T-cell (primary cell): ENCODE measurements at regions of chr2 and their contacts with region 1.

Region 1: DNA sequence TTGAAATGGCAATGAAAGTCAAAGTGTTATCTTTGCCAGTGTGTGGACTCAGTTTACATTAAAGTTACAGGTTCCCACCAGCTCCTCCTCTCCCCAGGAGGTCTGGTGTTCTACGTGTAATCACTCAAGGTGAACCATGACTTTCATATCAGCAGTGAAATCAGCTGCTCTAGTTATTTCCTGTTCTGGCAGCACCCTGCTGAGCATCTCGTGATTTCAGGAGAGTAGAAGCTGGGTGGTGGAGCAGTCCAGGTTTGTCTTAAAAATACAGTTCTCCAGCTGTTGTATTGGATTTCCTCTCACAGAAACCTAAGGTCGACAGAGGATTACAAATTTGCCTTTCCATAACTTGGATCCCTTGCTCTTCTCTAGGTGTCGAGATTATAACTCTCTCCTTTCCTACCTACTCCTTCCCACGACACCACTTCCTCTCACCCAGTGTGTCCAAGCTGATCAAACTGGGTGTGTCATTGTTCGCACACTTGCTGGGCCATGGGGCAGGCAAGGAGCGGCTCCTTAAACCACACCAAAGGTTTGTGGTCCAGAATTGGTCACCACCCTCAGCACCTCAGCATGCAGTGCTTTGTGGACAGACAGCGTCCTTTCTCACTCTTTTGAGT is 13.0 kb upstream of the ARHGAP25 start:
- DNase-seq: peak in 21 of 35 experiments; percentile 23 to 75 (median 35)
- ATAC-seq: peak; percentile 80 to 86 (median 84)
- H3K4me3 ChIP-seq: peak overlapping the region in 1 of 2 donors; percentile 18
- H3K4me3 Mint-ChIP-seq: peak overlapping the region; percentile 66 to 73 (median 70)
- H3K27ac ChIP-seq: peak overlapping the region; percentile 77
- H3K27ac Mint-ChIP-seq: peak overlapping the region; percentile 97 to 98
- H3K4me1 ChIP-seq: peaks cover 57 to 81% of the 10 kb centered on the region in 2 experiments
- H3K4me1 Mint-ChIP-seq: peaks cover 91 to 96% (median 94%) of the 10 kb centered on the region in 3 donors
- H3K27me3 ChIP-seq: no peaks in the 10 kb centered on the region
- H3K27me3 Mint-ChIP-seq: peaks cover 0 to 1% of the 10 kb centered on the region in 2 donors

Region 2: GRCh38 chr2:68709421-68709911 is 12.1 kb before region 1 on chr2:
- CTCF ChIA-PET with region 1: interaction called, 7 to 25 read pairs
- POLR2A ChIA-PET with region 1: interaction called in 1 of 2 experiments, 4 read pairs
- DNase-seq: peak in 1 of 35 experiments; percentile 59
- ATAC-seq: peak; percentile 50 to 80 (median 68)
- H3K4me3 ChIP-seq: no peak overlapping the region
- H3K4me3 Mint-ChIP-seq: no peak overlapping the region
- H3K27ac ChIP-seq: no peak overlapping the region
- H3K27ac Mint-ChIP-seq: peak overlapping the region; percentile 6 to 42
- H3K4me1 ChIP-seq: peaks cover 3 to 5% of the 10 kb centered on the region in 2 experiments
- H3K4me1 Mint-ChIP-seq: peaks cover 16 to 33% (median 19%) of the 10 kb centered on the region in 3 donors
- H3K27me3 ChIP-seq: no peaks in the 10 kb centered on the region
- H3K27me3 Mint-ChIP-seq: no peaks in the 10 kb centered on the region

Region 3: GRCh38 chr2:68734688-68735525 is 13.3 kb after region 1 on chr2 and contains the start of gene ARHGAP25:
- CTCF ChIA-PET with region 1: interaction called in 1 of 2 experiments, 15 read pairs
- POLR2A ChIA-PET with region 1: interaction called, 3 to 5 read pairs
- DNase-seq: peak in 31 of 35 experiments; percentile 13 to 71 (median 40)
- ATAC-seq: peak; percentile 73 to 80 (median 78)
- H3K4me3 ChIP-seq: peak within 1 kb of the TSS; percentile 57 to 81
- H3K4me3 Mint-ChIP-seq: no peak within 1 kb of the TSS
- H3K27ac ChIP-seq: peak within 1 kb of the TSS; percentile 83
- H3K27ac Mint-ChIP-seq: no peak within 1 kb of the TSS
- H3K4me1 ChIP-seq: peaks cover 42 to 44% of the 10 kb centered on the region in 2 experiments
- H3K4me1 Mint-ChIP-seq: peaks cover 32 to 44% (median 43%) of the 10 kb centered on the region in 3 donors
- H3K27me3 ChIP-seq: no peaks in the 10 kb centered on the region
- H3K27me3 Mint-ChIP-seq: no peaks in the 10 kb centered on the region
- total RNA-seq, gene ARHGAP25: 103 to 134 (median 123) TPM

Region 4: DNA sequence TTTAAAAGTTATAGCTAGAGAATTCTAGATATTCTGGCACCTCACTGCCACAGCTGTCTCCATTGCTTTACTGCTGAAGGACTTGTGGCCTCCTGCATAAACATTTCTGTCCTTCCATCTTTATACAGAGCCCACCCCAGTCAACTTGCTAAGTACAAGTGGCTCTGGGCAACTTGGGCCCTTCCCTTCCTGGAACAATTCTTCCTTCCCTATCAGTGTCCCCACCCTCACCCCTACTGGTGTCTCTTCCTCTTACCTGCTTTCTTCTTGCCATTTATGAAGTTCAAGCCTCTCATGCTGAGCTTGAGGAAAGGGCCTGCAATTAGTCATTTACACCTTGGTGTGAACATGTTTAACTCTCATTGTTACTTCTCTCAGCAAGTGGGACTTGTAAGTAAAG is 58.0 kb after region 1 on chr2:
- CTCF ChIA-PET with region 1: no interaction called
- POLR2A ChIA-PET with region 1: no interaction called
- DNase-seq: no peak
- ATAC-seq: no peak
- H3K4me3 ChIP-seq: peak overlapping the region in 1 of 2 donors; percentile 2
- H3K4me3 Mint-ChIP-seq: peak overlapping the region; percentile 6 to 66 (median 53)
- H3K27ac ChIP-seq: peak overlapping the region; percentile 56
- H3K27ac Mint-ChIP-seq: peak overlapping the region; percentile 91 to 94
- H3K4me1 ChIP-seq: peaks cover 19 to 73% of the 10 kb centered on the region in 2 experiments
- H3K4me1 Mint-ChIP-seq: peaks cover 73 to 76% (median 75%) of the 10 kb centered on the region in 3 donors
- H3K27me3 ChIP-seq: no peaks in the 10 kb centered on the region
- H3K27me3 Mint-ChIP-seq: no peaks in the 10 kb centered on the region

Region 5: DNA sequence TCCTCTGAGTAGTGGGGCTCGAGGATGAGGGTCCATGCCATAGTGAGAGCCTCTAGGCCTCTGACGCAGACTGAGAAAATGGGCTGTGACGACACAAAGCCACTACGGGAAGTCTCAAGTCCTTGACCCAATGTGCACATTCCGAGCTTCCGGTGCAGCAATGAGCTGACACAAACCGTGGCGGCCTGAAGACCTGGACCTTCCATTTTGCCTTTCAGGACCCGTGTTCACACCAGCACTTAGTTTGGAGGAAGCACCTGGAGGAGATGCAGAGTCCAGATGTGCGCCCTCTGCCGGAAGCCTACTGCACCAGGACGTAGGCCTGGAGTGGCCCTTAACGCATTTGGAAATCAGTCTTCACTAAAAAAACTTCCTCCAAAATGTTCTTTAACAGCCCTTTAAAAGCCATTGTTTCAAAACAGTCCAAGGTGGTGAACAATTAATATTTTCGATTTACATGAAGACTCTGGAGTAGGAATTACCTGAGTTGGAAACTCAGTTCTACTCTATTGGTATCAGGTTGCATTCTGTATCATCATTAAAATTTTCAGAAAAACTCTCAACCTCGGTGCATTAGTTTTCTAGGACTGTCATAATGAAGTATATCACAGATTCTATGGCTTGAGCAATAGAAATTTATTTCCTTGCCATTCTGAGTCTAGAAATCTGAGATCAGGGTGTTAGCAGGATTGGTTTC is 115.7 kb after region 1 on chr2:
- CTCF ChIA-PET with region 1: interaction called, 6 to 11 read pairs
- POLR2A ChIA-PET with region 1: no interaction called
- DNase-seq: peak in 34 of 35 experiments; percentile 30 to 81 (median 62)
- ATAC-seq: peak; percentile 62 to 85 (median 70)
- H3K4me3 ChIP-seq: no peak overlapping the region
- H3K4me3 Mint-ChIP-seq: no peak overlapping the region
- H3K27ac ChIP-seq: no peak overlapping the region
- H3K27ac Mint-ChIP-seq: peak overlapping the region; percentile 34 to 43
- H3K4me1 ChIP-seq: peaks cover 0 to 14% of the 10 kb centered on the region in 2 experiments
- H3K4me1 Mint-ChIP-seq: peaks cover 19 to 52% (median 30%) of the 10 kb centered on the region in 3 donors
- H3K27me3 ChIP-seq: no peaks in the 10 kb centered on the region
- H3K27me3 Mint-ChIP-seq: no peaks in the 10 kb centered on the region